Heart right ventricle (tissue), 16 donors: ENCODE measurements at regions of chr6 and their contacts with region 1.

Region 1: GRCh38 chr6:1609648-1610496 is at the start of gene FOXC1:
- DNase-seq: peak; percentile 89 to 92
- ATAC-seq: peak; percentile 84 to 95 (median 89)
- H3K4me3 ChIP-seq: peak within 1 kb of the TSS; percentile 53 to 81 (median 70)
- H3K27ac ChIP-seq: peak within 1 kb of the TSS; percentile 83 to 93 (median 91)
- H3K4me1 ChIP-seq: peaks cover 0 to 73% (median 11%) of the 10 kb centered on the region in 9 donors
- H3K27me3 ChIP-seq: peaks cover 14 to 94% (median 76%) of the 10 kb centered on the region in 7 donors
- CTCF ChIP-seq: no peak
- total RNA-seq, gene FOXC1: 2.8 to 7.4 (median 4.3) TPM

Region 2: GRCh38 chr6:1724616-1725015 is 114.7 kb after region 1 on chr6:
- intact Hi-C with region 1: no loop called
- DNase-seq: peak; percentile 64 to 67
- ATAC-seq: peak; percentile 90 to 99 (median 96)
- H3K4me3 ChIP-seq: no peak overlapping the region
- H3K27ac ChIP-seq: peak overlapping the region in 9 of 10 donors; percentile 39 to 71 (median 62)
- H3K4me1 ChIP-seq: peaks cover 0 to 25% (median 7%) of the 10 kb centered on the region in 9 donors
- H3K27me3 ChIP-seq: no peaks in the 10 kb centered on the region
- CTCF ChIP-seq: no peak

Region 3: GRCh38 chr6:1767481-1768251 is 157.8 kb after region 1 on chr6:
- intact Hi-C with region 1: no loop called
- DNase-seq: peak in 1 of 2 donors; percentile 49
- ATAC-seq: peak; percentile 85 to 96 (median 90)
- H3K4me3 ChIP-seq: no peak overlapping the region
- H3K27ac ChIP-seq: no peak overlapping the region
- H3K4me1 ChIP-seq: peaks cover 6 to 48% (median 27%) of the 10 kb centered on the region in 9 donors
- H3K27me3 ChIP-seq: no peaks in the 10 kb centered on the region
- CTCF ChIP-seq: no peak

Region 4: GRCh38 chr6:1802491-1803395 is 192.9 kb after region 1 on chr6:
- intact Hi-C with region 1: loop called in 1 of 10 experiments (anchors 10 kb)
- DNase-seq: no peak
- ATAC-seq: peak in 4 of 8 donors; percentile 49 to 75 (median 55)
- H3K4me3 ChIP-seq: peak overlapping the region in 6 of 10 donors; percentile 7 to 20 (median 10)
- H3K27ac ChIP-seq: peak overlapping the region in 5 of 10 donors; percentile 27 to 52 (median 43)
- H3K4me1 ChIP-seq: peaks cover 0 to 20% (median under 1%) of the 10 kb centered on the region in 9 donors
- H3K27me3 ChIP-seq: no peaks in the 10 kb centered on the region
- CTCF ChIP-seq: no peak

Region 5: GRCh38 chr6:2037237-2037926 is 427.5 kb after region 1 on chr6:
- intact Hi-C with region 1: loop called in 2 of 10 experiments (anchors 10 kb)
- DNase-seq: no peak
- ATAC-seq: no peak
- H3K4me3 ChIP-seq: no peak overlapping the region
- H3K27ac ChIP-seq: no peak overlapping the region
- H3K4me1 ChIP-seq: peaks cover 0 to 4% (median 0%) of the 10 kb centered on the region in 9 donors
- H3K27me3 ChIP-seq: no peaks in the 10 kb centered on the region
- CTCF ChIP-seq: peak in 5 of 9 donors; percentile 12 to 34 (median 25)

Region 6: GRCh38 chr6:2111162-2111677 is 501.3 kb after region 1 on chr6:
- intact Hi-C with region 1: loop called in 1 of 10 experiments (anchors 5 kb)
- DNase-seq: no peak
- ATAC-seq: peak in 6 of 8 donors; percentile 47 to 77 (median 72)
- H3K4me3 ChIP-seq: peak overlapping the region in 3 of 10 donors; percentile 10 to 18 (median 13)
- H3K27ac ChIP-seq: peak overlapping the region in 6 of 10 donors; percentile 5 to 79 (median 46)
- H3K4me1 ChIP-seq: peaks cover 0 to 20% (median 8%) of the 10 kb centered on the region in 9 donors
- H3K27me3 ChIP-seq: no peaks in the 10 kb centered on the region
- CTCF ChIP-seq: no peak

Region 7: DNA sequence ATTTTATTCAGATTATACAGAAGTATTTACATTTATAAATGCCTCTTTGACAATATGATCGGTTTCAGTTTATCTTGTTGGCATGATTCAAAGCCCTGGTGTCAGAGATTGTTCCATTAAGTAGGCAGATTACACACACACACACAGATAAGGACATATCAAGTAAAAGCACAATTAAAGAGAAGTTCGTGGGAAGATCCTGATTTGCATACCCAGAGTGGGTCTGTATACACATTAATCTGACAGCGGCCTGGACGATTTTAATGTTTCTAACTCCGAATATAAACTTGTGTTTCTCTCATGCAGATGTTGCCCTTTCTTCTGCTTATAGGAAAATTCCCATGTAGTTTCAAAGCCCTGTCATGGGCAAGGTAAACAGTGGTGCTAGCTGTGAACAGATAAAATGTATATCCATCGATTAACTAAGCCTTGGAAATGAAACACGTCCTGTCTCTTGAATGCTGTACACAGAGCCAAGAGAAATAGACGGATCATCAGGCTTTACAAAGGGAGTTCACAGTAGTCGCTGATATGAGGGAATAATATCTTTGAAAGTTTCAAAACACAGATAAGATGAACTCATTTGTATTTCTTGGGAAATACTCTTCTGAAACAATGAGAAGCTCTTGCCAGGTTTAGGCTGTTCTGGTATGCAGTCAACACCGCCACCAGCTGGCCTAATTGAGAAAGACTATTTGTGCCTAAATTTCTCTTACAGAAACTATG is 743.7 kb after region 1 on chr6:
- intact Hi-C with region 1: loop called in 5 of 10 experiments (anchors 2 to 5 kb)
- DNase-seq: peak; percentile 23 to 69
- ATAC-seq: peak; percentile 59 to 81 (median 78)
- H3K4me3 ChIP-seq: no peak overlapping the region
- H3K27ac ChIP-seq: no peak overlapping the region
- H3K4me1 ChIP-seq: peaks cover 0 to 12% (median 0%) of the 10 kb centered on the region in 9 donors
- H3K27me3 ChIP-seq: no peaks in the 10 kb centered on the region
- CTCF ChIP-seq: peak; percentile 63 to 88 (median 81)

Region 8: DNA sequence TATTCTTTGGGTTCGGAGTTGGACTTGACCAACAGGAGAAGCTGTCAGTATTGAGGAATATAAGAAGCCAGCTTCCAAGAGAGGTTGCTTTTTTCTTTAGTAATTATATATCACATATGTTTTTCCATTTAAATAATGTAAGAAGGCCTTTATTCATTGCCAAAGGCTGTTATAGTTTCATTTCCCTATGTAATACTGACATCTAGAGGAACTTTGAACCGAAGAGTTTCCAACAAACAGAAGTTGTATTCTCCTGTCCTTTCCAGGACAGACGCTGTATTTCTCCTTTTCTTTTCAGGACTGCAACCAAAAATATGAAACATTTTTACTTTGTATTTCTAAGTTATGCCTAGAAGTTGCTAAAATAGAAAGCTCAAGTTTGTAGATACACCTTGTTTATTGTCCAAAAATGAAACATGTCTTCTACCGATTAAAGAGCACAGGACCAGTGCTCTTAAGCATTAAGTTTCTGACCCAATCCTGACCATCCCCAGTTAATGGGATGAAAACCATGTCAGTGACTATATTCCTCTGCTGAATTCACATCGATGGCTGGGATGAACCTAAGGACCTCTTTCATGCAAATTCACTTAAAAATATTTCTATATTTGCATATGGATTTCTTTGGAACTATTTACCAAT is 1085.7 kb after region 1 on chr6:
- intact Hi-C with region 1: loop called in 1 of 10 experiments (anchors 5 kb)
- DNase-seq: no peak
- ATAC-seq: peak in 3 of 8 donors; percentile 47 to 54 (median 48)
- H3K4me3 ChIP-seq: no peak overlapping the region
- H3K27ac ChIP-seq: no peak overlapping the region
- H3K4me1 ChIP-seq: peaks cover 0 to 7% (median 0%) of the 10 kb centered on the region in 9 donors
- H3K27me3 ChIP-seq: no peaks in the 10 kb centered on the region
- CTCF ChIP-seq: peak; percentile 7 to 66 (median 52)